H1 (cell line): ENCODE measurements at regions of chr22 and their contacts with region 1.

Region 1: DNA sequence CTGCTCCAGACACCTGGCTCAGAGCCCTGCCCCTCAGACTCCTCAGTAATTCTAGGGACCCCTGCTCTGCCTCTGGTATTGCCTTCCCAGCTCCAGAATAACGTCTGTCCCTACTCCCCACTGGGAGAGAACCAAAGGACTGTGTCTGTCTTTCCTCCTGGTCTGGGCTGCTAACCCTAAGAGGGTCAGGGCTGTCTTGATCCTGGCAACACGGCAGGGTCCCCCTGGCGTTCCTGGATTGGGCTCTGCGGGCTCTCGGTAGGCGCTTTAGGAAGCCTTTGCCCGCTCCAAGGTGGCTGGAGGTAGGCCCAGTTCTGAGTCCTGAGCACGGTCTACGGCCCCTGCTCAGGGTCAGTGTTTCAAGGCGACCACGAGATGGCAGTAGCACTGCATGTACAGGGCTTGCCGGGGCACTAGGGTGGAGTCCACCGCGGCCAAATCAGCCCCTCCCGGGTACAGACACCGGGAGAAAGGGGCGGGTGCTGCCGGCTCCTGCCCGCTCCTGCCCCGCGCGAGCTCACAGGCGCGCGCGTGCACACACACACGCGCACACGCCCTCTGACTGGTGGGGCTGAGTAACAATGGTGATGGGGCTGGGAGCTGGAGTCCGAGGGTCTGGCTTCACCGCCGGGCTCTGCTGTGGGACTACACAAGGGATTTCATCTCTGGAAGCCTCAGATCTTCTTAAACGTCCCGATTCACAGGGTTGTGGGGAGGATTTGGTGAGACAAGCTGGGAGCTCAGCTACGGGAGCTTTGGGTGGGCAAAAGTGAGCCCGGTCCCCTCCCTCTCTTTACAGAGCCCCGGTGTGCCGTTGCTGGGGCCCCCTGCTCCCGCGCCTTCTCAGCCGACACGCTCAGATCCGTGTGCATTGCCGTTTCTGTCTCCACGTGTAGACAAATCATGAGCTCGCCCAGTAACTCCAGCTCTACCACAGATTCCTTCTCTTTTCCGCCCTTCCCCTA is 30.1 kb upstream of the HMOX1 start:
- DNase-seq: peak; percentile 75 to 94
- H3K4me3 ChIP-seq: peak overlapping the region; percentile 38 to 79 (median 70)
- H3K27ac ChIP-seq: no peak overlapping the region
- H3K4me1 ChIP-seq: peaks cover 0 to 12% (median 5%) of the 10 kb centered on the region in 4 experiments; a peak in 5 of 7 replicates
- H3K27me3 ChIP-seq: peaks cover 0 to 4% (median 0%) of the 10 kb centered on the region in 4 experiments; a peak in 4 of 7 replicates
- CTCF ChIP-seq: peak; percentile 87 to 93 (median 89)
- EP300 ChIP-seq: no peak
- POLR2A ChIP-seq: no peak
- RAD21 ChIP-seq: peak; percentile 97 to 98

Region 2: GRCh38 chr22:35231585-35232084 is 119.2 kb before region 1 on chr22:
- CTCF ChIA-PET with region 1: no interaction called
- POLR2A ChIA-PET with region 1: no interaction called
- DNase-seq: peak; percentile 68 to 91
- H3K4me3 ChIP-seq: no peak overlapping the region
- H3K27ac ChIP-seq: no peak overlapping the region
- H3K4me1 ChIP-seq: peaks cover 0 to 3% (median 2%) of the 10 kb centered on the region in 4 experiments; a peak in 2 of 7 replicates
- H3K27me3 ChIP-seq: no peaks in the 10 kb centered on the region; a peak in 1 of 7 replicates
- CTCF ChIP-seq: peak; percentile 87 to 99 (median 98)
- EP300 ChIP-seq: no peak
- POLR2A ChIP-seq: no peak
- RAD21 ChIP-seq: peak; percentile 93 to 94

Region 3: GRCh38 chr22:35337932-35338331 is 12.9 kb before region 1 on chr22:
- CTCF ChIA-PET with region 1: interaction called, 20 read pairs
- POLR2A ChIA-PET with region 1: interaction called, 4 read pairs
- DNase-seq: no peak
- H3K4me3 ChIP-seq: no peak overlapping the region
- H3K27ac ChIP-seq: no peak overlapping the region
- H3K4me1 ChIP-seq: no peaks in the 10 kb centered on the region; a peak in 3 of 7 replicates
- H3K27me3 ChIP-seq: no peaks in the 10 kb centered on the region
- CTCF ChIP-seq: peak; percentile 18 to 41 (median 25)
- EP300 ChIP-seq: no peak
- POLR2A ChIP-seq: no peak
- RAD21 ChIP-seq: peak; percentile 22 to 58; a peak in 3 of 4 replicates

Region 4: GRCh38 chr22:35399678-35400334 is 49.0 kb after region 1 on chr22 and contains the start of gene MCM5:
- CTCF ChIA-PET with region 1: interaction called, 7 read pairs
- POLR2A ChIA-PET with region 1: interaction called, 12 read pairs
- DNase-seq: peak; percentile 89 to 95
- H3K4me3 ChIP-seq: peak within 1 kb of the TSS; percentile 83 to 98 (median 90)
- H3K27ac ChIP-seq: peak within 1 kb of the TSS; percentile 98
- H3K4me1 ChIP-seq: peaks cover 8 to 25% (median 13%) of the 10 kb centered on the region in 4 experiments
- H3K27me3 ChIP-seq: no peaks in the 10 kb centered on the region
- CTCF ChIP-seq: no peak
- EP300 ChIP-seq: peak in 1 of 2 experiments; percentile 21; a peak in 1 of 3 replicates
- POLR2A ChIP-seq: peak; percentile 86 to 95
- RAD21 ChIP-seq: no peak
- total RNA-seq, gene MCM5: 297 and 305 TPM in 2 replicates

Region 5: DNA sequence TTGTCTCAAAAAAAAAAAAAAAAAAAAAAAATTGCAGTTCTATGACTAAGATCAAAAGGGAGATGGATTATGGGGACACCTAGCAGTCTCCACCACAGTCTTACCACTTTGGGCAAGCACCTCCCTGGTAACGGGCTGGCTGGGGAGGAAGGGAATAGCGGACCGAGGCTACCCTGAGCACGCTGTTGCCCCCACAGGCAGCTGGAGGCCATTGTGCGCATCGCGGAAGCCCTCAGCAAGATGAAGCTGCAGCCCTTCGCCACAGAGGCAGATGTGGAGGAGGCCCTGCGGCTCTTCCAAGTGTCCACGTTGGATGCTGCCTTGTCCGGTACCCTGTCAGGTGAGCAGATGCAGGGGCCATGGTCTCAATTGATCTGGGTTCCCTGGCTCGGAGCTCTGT is 70.3 kb after region 1 on chr22:
- CTCF ChIA-PET with region 1: interaction called, 32 read pairs
- POLR2A ChIA-PET with region 1: interaction called, 7 read pairs
- DNase-seq: no peak
- H3K4me3 ChIP-seq: no peak overlapping the region
- H3K27ac ChIP-seq: no peak overlapping the region
- H3K4me1 ChIP-seq: peaks cover 0 to 6% (median 4%) of the 10 kb centered on the region in 4 experiments; a peak in 6 of 7 replicates
- H3K27me3 ChIP-seq: no peaks in the 10 kb centered on the region
- CTCF ChIP-seq: peak in 2 of 3 experiments; percentile 60 to 76; a peak in 2 of 4 replicates
- EP300 ChIP-seq: no peak
- POLR2A ChIP-seq: no peak; a peak in 1 of 3 replicates
- RAD21 ChIP-seq: peak; percentile 11 to 23; a peak in 2 of 4 replicates

Region 6: GRCh38 chr22:35582861-35583670 is 232.2 kb after region 1 on chr22:
- CTCF ChIA-PET with region 1: interaction called, 28 read pairs
- POLR2A ChIA-PET with region 1: no interaction called
- DNase-seq: peak in 1 of 2 experiments; percentile 82
- H3K4me3 ChIP-seq: no peak overlapping the region
- H3K27ac ChIP-seq: no peak overlapping the region
- H3K4me1 ChIP-seq: no peaks in the 10 kb centered on the region
- H3K27me3 ChIP-seq: no peaks in the 10 kb centered on the region; a peak in 1 of 7 replicates
- CTCF ChIP-seq: peak; percentile 92 to 95 (median 92)
- EP300 ChIP-seq: no peak
- POLR2A ChIP-seq: no peak
- RAD21 ChIP-seq: peak; percentile 95 to 97